ENCODE measurements at regions of chr14 and their contacts with region 1.

Region 1: DNA sequence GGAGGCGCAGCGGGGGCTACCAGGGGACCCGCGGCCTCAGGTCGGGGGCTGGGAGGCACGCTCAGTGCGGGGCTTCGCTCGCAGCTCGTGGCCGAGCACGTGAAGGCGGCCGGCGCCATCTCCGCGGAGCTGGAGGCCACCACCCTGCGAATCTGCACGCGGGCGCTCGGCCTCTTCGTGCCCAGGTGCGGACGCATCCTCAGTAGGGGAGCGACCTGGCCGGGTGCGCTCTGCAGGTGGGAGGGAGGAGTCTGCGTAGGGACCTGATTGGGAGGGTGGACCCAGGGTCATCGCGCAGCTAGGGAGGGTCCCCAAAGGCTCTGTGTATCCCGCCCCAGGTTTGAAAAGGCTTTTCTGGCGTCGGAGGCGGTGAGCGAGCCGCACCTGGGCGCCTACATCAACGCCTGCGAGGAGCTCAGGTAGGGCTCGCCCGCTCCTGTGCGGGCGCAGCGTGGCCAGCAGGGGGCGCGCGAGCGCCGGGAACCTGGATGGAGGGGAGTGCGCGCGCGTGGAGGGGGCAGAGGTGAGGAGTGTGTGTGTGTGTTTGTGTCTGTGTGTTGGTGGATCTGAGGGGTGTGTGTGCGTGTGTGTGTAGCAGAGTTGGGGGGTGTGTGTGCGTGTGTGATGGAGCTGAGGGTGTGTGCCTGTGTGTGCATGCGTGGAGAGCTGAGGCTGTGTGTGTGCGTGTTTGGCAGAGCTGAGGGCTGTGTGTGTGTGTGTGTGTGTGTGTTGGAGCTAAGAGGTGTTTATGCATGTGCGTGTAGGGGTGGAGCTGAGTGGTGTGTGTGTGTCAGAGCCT is 10.3 kb downstream of the EXOC3L4 start:
- DNase-seq: peak in 1 of 2 experiments; percentile 81
- ATAC-seq: peak; percentile 37 to 71
- H3K4me3 ChIP-seq: peak overlapping the region; percentile 42
- H3K27ac ChIP-seq: peak overlapping the region; percentile 94
- H3K4me1 ChIP-seq: peaks cover 74% of the 10 kb centered on the region
- CTCF ChIP-seq: peak; percentile 94
- EP300 ChIP-seq: no peak
- POLR2A ChIP-seq: no peak
- RAD21 ChIP-seq: peak; percentile 92 to 98

Region 2: GRCh38 chr14:102930753-102931579 is 173.9 kb before region 1 on chr14:
- CTCF ChIA-PET with region 1: no interaction called
- POLR2A ChIA-PET with region 1: no interaction called
- DNase-seq: no peak
- ATAC-seq: no peak; a peak in 1 of 6 replicates
- H3K4me3 ChIP-seq: no peak overlapping the region
- H3K27ac ChIP-seq: no peak overlapping the region
- H3K4me1 ChIP-seq: no peaks in the 10 kb centered on the region
- CTCF ChIP-seq: no peak
- EP300 ChIP-seq: no peak
- POLR2A ChIP-seq: no peak
- RAD21 ChIP-seq: no peak

Region 3: DNA sequence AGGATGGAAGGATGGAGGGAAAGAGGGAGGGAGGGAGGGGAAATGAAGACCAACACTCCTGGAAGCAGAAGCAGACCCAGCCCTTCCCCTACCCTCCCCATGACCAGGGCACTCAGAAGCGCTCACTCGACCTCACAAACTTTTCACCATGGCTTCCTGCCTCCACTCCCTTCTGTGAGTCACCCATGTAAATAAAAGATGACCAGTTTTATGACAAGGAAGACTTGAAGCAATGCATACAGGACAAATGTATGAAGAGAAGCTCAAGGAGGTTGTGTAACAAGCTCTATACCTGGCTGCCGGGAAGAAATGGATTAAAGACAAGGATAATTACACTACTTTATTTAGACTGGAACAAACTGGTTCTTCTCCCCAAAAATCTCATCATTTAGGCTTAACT is 111.3 kb before region 1 on chr14:
- CTCF ChIA-PET with region 1: no interaction called
- POLR2A ChIA-PET with region 1: no interaction called
- DNase-seq: peak; percentile 85 to 89
- ATAC-seq: peak; percentile 94 to 95
- H3K4me3 ChIP-seq: no peak overlapping the region; the same call in 2 of the 3 replicates
- H3K27ac ChIP-seq: peak overlapping the region; percentile 70 to 85
- H3K4me1 ChIP-seq: peaks cover 26% of the 10 kb centered on the region
- CTCF ChIP-seq: no peak
- EP300 ChIP-seq: no peak
- POLR2A ChIP-seq: no peak
- RAD21 ChIP-seq: no peak

Region 4: GRCh38 chr14:103085106-103086091 is 19.5 kb before region 1 on chr14:
- CTCF ChIA-PET with region 1: interaction called, 259 read pairs
- POLR2A ChIA-PET with region 1: interaction called, 3 read pairs
- DNase-seq: no peak
- ATAC-seq: peak; percentile 60 to 85; a peak in 4 of 6 replicates
- H3K4me3 ChIP-seq: no peak overlapping the region
- H3K27ac ChIP-seq: peak overlapping the region in 1 of 2 experiments; percentile 29; a peak in 1 of 6 replicates
- H3K4me1 ChIP-seq: no peaks in the 10 kb centered on the region
- CTCF ChIP-seq: peak; percentile 30
- EP300 ChIP-seq: no peak
- POLR2A ChIP-seq: no peak
- RAD21 ChIP-seq: peak; percentile 23 to 46; a peak in 2 of 5 replicates

Region 5: GRCh38 chr14:103155013-103155412 is 50.2 kb after region 1 on chr14:
- CTCF ChIA-PET with region 1: interaction called, 57 read pairs
- POLR2A ChIA-PET with region 1: no interaction called
- DNase-seq: peak; percentile 88 to 89
- ATAC-seq: peak; percentile 96 to 98
- H3K4me3 ChIP-seq: no peak overlapping the region
- H3K27ac ChIP-seq: peak overlapping the region; percentile 79 to 93
- H3K4me1 ChIP-seq: peaks cover 25% of the 10 kb centered on the region
- CTCF ChIP-seq: no peak
- EP300 ChIP-seq: no peak
- POLR2A ChIP-seq: no peak
- RAD21 ChIP-seq: no peak

Region 6: DNA sequence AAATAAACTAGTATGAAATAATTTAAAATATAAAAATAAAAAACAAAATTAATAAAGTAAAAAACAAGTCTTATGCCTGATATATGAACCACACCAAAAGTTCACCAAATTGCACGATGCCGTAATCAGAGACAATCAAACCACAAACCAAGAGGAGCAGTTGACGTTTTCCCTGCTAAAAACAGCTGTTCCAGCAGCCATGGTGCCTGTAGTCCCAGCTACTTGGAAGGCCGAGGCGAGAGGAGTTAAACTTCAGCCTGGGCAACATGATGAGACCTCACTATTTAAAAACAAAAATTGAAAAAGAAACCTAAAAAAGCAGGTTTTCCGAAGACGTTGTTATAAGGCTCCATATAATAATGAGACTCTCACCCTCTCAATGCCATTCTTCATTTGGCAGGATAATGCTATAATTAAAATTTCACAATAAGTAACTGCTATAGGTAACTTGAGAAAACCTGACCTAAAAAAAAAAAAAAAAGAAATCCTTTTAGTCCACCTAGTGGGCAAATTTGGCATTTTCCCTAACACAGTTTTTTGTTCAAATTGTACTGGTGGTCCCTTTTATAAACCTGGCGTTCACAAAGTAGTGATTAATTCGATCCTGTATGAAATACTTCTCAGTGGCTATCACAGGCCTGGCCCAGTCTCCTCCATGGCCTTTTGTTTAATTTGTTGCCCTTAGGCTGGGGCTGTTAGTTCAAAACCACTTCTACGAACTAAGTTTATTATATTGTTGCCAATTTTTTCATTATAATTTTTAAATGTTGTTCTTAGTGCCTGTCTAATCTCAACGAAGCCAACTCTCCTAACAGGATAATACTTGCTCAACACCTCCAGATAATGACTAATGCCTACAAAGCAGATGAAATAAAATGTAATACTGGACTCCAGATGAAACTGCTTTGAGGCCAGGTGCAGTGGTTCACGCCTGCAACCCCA is 80.5 kb after region 1 on chr14:
- CTCF ChIA-PET with region 1: interaction called, 261 read pairs
- POLR2A ChIA-PET with region 1: no interaction called
- DNase-seq: peak; percentile 31 to 54
- ATAC-seq: peak in 1 of 2 experiments; percentile 35; a peak in 2 of 6 replicates
- H3K4me3 ChIP-seq: no peak overlapping the region
- H3K27ac ChIP-seq: peak overlapping the region; percentile 44 to 74; a peak in 5 of 6 replicates
- H3K4me1 ChIP-seq: peaks cover 28% of the 10 kb centered on the region
- CTCF ChIP-seq: peak; percentile 75
- EP300 ChIP-seq: no peak
- POLR2A ChIP-seq: no peak
- RAD21 ChIP-seq: peak; percentile 71 to 75

Region 7: GRCh38 chr14:103250888-103251505 is 146.1 kb after region 1 on chr14:
- CTCF ChIA-PET with region 1: interaction called, 17 read pairs
- POLR2A ChIA-PET with region 1: no interaction called
- DNase-seq: peak in 1 of 2 experiments; percentile 32
- ATAC-seq: no peak
- H3K4me3 ChIP-seq: no peak overlapping the region
- H3K27ac ChIP-seq: peak overlapping the region; percentile 66 to 80
- H3K4me1 ChIP-seq: peaks cover 45% of the 10 kb centered on the region
- CTCF ChIP-seq: no peak
- EP300 ChIP-seq: no peak
- POLR2A ChIP-seq: no peak
- RAD21 ChIP-seq: no peak

Region 8: GRCh38 chr14:103298620-103299019 is 193.8 kb after region 1 on chr14:
- CTCF ChIA-PET with region 1: interaction called, 345 read pairs
- POLR2A ChIA-PET with region 1: no interaction called
- DNase-seq: peak in 1 of 2 experiments; percentile 24
- ATAC-seq: no peak
- H3K4me3 ChIP-seq: no peak overlapping the region
- H3K27ac ChIP-seq: no peak overlapping the region
- H3K4me1 ChIP-seq: peaks cover 34% of the 10 kb centered on the region
- CTCF ChIP-seq: no peak; the same call in 2 of the 3 replicates
- EP300 ChIP-seq: no peak
- POLR2A ChIP-seq: no peak
- RAD21 ChIP-seq: no peak

Measured in A549 (cell line).